AG04449 (cell line): ENCODE measurements at regions of chr4 and their contacts with region 1.

Region 1: DNA sequence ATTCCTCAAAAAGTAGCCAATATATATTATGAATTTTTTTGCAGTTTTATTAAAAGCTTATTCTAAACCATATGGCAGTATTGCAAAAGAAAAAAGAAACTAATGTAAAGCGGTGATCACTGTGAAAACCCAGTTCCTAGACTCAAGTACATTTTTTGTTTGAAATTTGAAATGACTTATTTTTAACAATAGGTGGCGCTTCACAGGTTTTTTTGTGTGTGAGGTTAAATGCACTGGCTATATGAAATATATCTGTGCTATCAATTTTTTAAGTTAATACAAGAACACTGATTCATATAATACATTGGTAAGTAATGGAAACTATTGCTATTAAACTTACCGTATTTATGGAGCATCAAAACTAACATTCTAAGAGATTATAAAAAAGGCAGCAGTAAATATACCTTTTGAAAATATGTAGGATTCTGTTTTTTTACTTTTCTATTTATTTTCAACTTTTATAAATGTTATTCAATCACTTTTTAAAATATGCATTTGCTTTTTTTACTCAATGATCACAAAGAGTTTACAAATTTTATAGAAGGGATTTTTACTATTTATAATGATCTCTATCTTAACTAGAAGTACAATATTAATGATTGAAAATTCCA is 5.6 kb upstream of the SPRY1 start:
- DNase-seq: no peak
- H3K4me3 ChIP-seq: no peak overlapping the region
- CTCF ChIP-seq: peak; percentile 11

Region 2: DNA sequence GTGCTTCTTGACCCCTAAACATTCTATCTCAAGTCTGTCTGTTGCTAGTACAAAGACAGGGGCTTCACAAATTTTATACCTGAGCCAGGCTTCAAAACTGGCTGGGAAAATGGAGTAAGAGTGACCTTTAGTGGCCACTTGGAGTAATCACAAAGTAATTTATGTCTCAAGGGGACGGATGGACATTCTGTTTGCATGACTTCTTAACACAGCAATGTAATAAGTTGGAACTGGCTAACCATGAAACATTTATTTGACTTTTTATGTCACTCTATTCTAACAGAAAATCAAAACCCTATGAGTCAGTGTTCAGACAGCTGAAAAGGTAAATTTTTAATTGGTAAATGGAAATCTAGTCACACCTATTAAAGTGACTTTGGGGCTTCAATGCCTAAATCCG is 721.0 kb after region 1 on chr4:
- CTCF ChIA-PET with region 1: interaction called, 10 read pairs
- POLR2A ChIA-PET with region 1: no interaction called
- DNase-seq: peak; percentile 44
- H3K4me3 ChIP-seq: no peak overlapping the region
- CTCF ChIP-seq: peak; percentile 34